CD8-positive, alpha-beta memory T cell (primary cell): ENCODE measurements at regions of chr6 and their contacts with region 1.

Region 1: GRCh38 chr6:2917065-2917464 is 14.0 kb upstream of the SERPINB9 start:
- DNase-seq: no peak
- H3K4me3 ChIP-seq: no peak overlapping the region
- H3K4me3 Mint-ChIP-seq: no peak overlapping the region
- H3K27ac ChIP-seq: no peak overlapping the region
- H3K27ac Mint-ChIP-seq: peak overlapping the region in 1 of 8 donors; percentile 12
- H3K4me1 ChIP-seq: peaks cover 8% of the 10 kb centered on the region
- H3K4me1 Mint-ChIP-seq: peaks cover 19 to 29% (median 28%) of the 10 kb centered on the region in 3 donors
- H3K27me3 ChIP-seq: no peaks in the 10 kb centered on the region
- H3K27me3 Mint-ChIP-seq: no peaks in the 10 kb centered on the region

Region 2: GRCh38 chr6:2791124-2791974 is 125.7 kb before region 1 on chr6:
- CTCF ChIA-PET with region 1: interaction called, 17 read pairs
- POLR2A ChIA-PET with region 1: interaction called, 8 read pairs
- DNase-seq: peak in 4 of 5 donors; percentile 17 to 70 (median 38)
- H3K4me3 ChIP-seq: no peak overlapping the region
- H3K4me3 Mint-ChIP-seq: peak overlapping the region in 4 of 7 donors; percentile 41 to 53 (median 42)
- H3K27ac ChIP-seq: no peak overlapping the region
- H3K27ac Mint-ChIP-seq: peak overlapping the region; percentile 30 to 91 (median 74)
- H3K4me1 ChIP-seq: peaks cover 23% of the 10 kb centered on the region
- H3K4me1 Mint-ChIP-seq: peaks cover 31 to 38% (median 32%) of the 10 kb centered on the region in 3 donors
- H3K27me3 ChIP-seq: no peaks in the 10 kb centered on the region
- H3K27me3 Mint-ChIP-seq: no peaks in the 10 kb centered on the region

Region 3: GRCh38 chr6:3186974-3187382 is 269.9 kb after region 1 on chr6:
- CTCF ChIA-PET with region 1: no interaction called
- POLR2A ChIA-PET with region 1: no interaction called
- DNase-seq: no peak
- H3K4me3 ChIP-seq: no peak overlapping the region
- H3K4me3 Mint-ChIP-seq: no peak overlapping the region
- H3K27ac ChIP-seq: no peak overlapping the region
- H3K27ac Mint-ChIP-seq: no peak overlapping the region
- H3K4me1 ChIP-seq: no peaks in the 10 kb centered on the region
- H3K4me1 Mint-ChIP-seq: no peaks in the 10 kb centered on the region
- H3K27me3 ChIP-seq: no peaks in the 10 kb centered on the region
- H3K27me3 Mint-ChIP-seq: peaks cover 18 to 46% of the 10 kb centered on the region in 2 donors